ENCODE measurements at regions of chr19 and their contacts with region 1.

Region 1: GRCh38 chr19:40650749-40651305 is 39.6 kb downstream of the NUMBL start:
- DNase-seq: peak; percentile 36
- H3K4me3 ChIP-seq: no peak overlapping the region
- H3K27ac ChIP-seq: peak overlapping the region; percentile 47
- H3K27me3 ChIP-seq: no peaks in the 10 kb centered on the region
- CTCF ChIP-seq: no peak

Region 2: GRCh38 chr19:40613640-40614303 is 37.1 kb before region 1 on chr19:
- CTCF ChIA-PET with region 1: no interaction called
- POLR2A ChIA-PET with region 1: interaction called, 31 read pairs
- DNase-seq: peak; percentile 67
- H3K4me3 ChIP-seq: peak overlapping the region; percentile 88
- H3K27ac ChIP-seq: peak overlapping the region; percentile 95
- H3K27me3 ChIP-seq: no peaks in the 10 kb centered on the region
- CTCF ChIP-seq: no peak

Region 3: GRCh38 chr19:40623403-40624251 is 27.2 kb before region 1 on chr19:
- CTCF ChIA-PET with region 1: no interaction called
- POLR2A ChIA-PET with region 1: interaction called, 12 read pairs
- DNase-seq: no peak
- H3K4me3 ChIP-seq: no peak overlapping the region
- H3K27ac ChIP-seq: no peak overlapping the region
- H3K27me3 ChIP-seq: no peaks in the 10 kb centered on the region
- CTCF ChIP-seq: no peak

Region 4: DNA sequence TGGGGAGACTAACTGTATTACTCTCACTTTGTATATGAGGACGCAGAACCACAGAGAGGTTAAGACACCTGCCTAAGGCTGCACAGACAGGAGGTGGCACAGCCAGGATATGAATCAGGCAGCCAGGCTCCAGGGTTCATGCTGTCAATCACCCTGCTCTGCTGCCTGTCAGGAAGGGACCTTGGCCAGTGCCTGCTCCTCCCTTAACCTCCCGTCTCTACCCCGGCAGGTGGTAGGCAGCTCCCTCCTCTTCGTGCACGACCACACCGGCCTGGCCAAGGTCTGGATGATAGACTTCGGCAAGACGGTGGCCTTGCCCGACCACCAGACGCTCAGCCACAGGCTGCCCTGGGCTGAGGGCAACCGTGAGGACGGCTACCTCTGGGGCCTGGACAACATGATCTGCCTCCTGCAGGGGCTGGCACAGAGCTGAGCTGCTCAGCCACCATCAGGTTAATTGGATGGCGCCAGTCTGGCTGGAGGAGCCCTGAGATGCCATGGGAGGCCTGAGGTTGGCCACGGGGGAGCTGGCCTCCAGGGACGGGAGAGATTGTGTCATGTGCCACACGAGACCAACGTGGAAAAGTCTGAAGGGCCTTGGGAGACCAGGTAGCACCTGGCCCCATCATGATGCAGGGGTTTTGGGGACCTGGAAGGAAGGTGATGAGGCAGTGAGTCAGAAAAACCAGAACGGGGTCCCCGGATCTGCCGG is 88.5 kb after region 1 on chr19:
- CTCF ChIA-PET with region 1: no interaction called
- POLR2A ChIA-PET with region 1: no interaction called
- DNase-seq: no peak
- H3K4me3 ChIP-seq: no peak overlapping the region
- H3K27ac ChIP-seq: no peak overlapping the region
- H3K27me3 ChIP-seq: no peaks in the 10 kb centered on the region
- CTCF ChIP-seq: no peak

Region 5: GRCh38 chr19:40806488-40807468 is 156.0 kb after region 1 on chr19:
- CTCF ChIA-PET with region 1: no interaction called
- POLR2A ChIA-PET with region 1: interaction called, 14 read pairs
- DNase-seq: peak; percentile 77
- H3K4me3 ChIP-seq: peak overlapping the region; percentile 35
- H3K27ac ChIP-seq: peak overlapping the region; percentile 39
- H3K27me3 ChIP-seq: no peaks in the 10 kb centered on the region
- CTCF ChIP-seq: peak; percentile 94

Region 6: GRCh38 chr19:41288673-41289505 is 638.1 kb after region 1 on chr19:
- CTCF ChIA-PET with region 1: no interaction called
- POLR2A ChIA-PET with region 1: interaction called, 11 read pairs
- DNase-seq: no peak
- H3K4me3 ChIP-seq: no peak overlapping the region
- H3K27ac ChIP-seq: no peak overlapping the region
- H3K27me3 ChIP-seq: no peaks in the 10 kb centered on the region
- CTCF ChIP-seq: no peak